Activated naive CD4-positive, alpha-beta T cell treated with anti-CD3 and anti-CD28 coated beads, Interleukin-2, amount 10 ng/mL, durations not matched to agents 7 days and 5 days (primary cell): ENCODE measurements at regions of chr7 and their contacts with region 1.

Region 1: GRCh38 chr7:137898839-137899721 is 52.3 kb upstream of the DGKI start:
- DNase-seq: peak; percentile 83
- H3K4me3 Mint-ChIP-seq: no peak overlapping the region
- H3K27ac Mint-ChIP-seq: peak overlapping the region; percentile 73
- H3K4me1 Mint-ChIP-seq: peaks cover 28% of the 10 kb centered on the region
- H3K27me3 Mint-ChIP-seq: no peaks in the 10 kb centered on the region

Region 2: DNA sequence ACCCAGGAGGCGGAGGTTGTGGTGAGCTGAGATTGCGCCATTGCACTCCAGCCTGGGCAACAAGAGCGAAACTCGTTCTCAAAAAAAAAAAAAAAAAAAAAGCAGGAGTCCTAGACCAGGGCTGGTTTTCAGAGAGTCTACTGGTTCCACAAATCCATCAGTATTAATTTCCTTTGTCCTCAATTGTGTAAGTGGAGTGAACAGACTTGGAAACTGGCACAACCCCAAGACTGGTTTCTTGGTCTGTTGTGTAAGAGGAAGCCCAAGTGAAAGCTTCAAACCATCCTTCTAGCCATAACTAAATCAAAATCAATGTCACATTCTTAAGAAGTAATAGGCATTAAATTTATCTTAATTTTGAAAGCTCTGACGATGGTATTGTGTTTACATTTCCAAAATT is 265.9 kb before region 1 on chr7:
- CTCF ChIA-PET with region 1: no interaction called
- DNase-seq: no peak
- H3K4me3 Mint-ChIP-seq: no peak overlapping the region
- H3K27ac Mint-ChIP-seq: no peak overlapping the region
- H3K4me1 Mint-ChIP-seq: no peaks in the 10 kb centered on the region
- H3K27me3 Mint-ChIP-seq: peaks cover 3% of the 10 kb centered on the region

Region 3: GRCh38 chr7:137656227-137656849 is 242.7 kb before region 1 on chr7:
- CTCF ChIA-PET with region 1: interaction called, 50 read pairs
- DNase-seq: peak; percentile 78
- H3K4me3 Mint-ChIP-seq: no peak overlapping the region
- H3K27ac Mint-ChIP-seq: no peak overlapping the region
- H3K4me1 Mint-ChIP-seq: no peaks in the 10 kb centered on the region
- H3K27me3 Mint-ChIP-seq: no peaks in the 10 kb centered on the region

Region 4: GRCh38 chr7:137920637-137921399 is 21.7 kb after region 1 on chr7:
- CTCF ChIA-PET with region 1: interaction called, 11 read pairs
- DNase-seq: no peak
- H3K4me3 Mint-ChIP-seq: no peak overlapping the region
- H3K27ac Mint-ChIP-seq: no peak overlapping the region
- H3K4me1 Mint-ChIP-seq: peaks cover 20% of the 10 kb centered on the region
- H3K27me3 Mint-ChIP-seq: no peaks in the 10 kb centered on the region

Region 5: DNA sequence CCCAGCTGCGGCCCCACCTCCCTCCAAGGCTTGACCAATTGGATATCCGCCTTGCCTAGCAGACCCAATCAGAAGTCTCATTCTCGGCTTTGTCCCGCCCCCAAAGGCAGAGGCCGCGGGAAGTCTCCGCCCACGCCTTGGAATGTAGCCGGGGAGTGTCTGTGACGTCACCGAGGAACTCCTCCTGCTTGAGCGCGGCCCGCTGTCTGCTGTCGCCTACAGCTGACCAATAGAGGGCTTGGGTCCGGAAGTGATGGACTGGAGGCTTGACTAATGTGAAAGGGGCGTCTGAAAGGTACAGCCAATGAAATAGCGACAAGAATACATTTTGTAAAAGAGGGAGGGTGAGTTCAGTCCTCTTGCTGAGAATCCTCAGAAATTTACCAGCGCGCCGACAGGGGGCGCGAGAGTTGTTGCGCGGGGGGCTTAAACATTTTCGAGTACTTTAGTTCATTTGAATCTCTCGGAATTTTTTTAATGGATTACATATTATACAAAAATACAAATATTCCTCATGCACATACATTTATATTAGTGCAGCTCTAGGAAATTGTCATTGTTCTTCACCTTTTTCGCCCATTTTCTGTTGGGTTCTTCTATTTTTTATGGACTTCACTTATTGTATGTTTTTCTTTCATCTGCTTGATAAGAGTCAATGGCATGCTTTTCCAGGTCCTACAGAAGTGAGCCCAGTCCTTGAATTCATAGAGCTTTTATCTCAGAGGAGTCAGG is 103.2 kb after region 1 on chr7:
- CTCF ChIA-PET with region 1: interaction called, 266 read pairs
- DNase-seq: peak; percentile 98
- H3K4me3 Mint-ChIP-seq: peak overlapping the region; percentile 93
- H3K27ac Mint-ChIP-seq: peak overlapping the region; percentile 95
- H3K4me1 Mint-ChIP-seq: peaks cover 43% of the 10 kb centered on the region
- H3K27me3 Mint-ChIP-seq: peaks cover 3% of the 10 kb centered on the region

Region 6: GRCh38 chr7:138173548-138173947 is 274.5 kb after region 1 on chr7:
- CTCF ChIA-PET with region 1: no interaction called
- DNase-seq: no peak
- H3K4me3 Mint-ChIP-seq: no peak overlapping the region
- H3K27ac Mint-ChIP-seq: no peak overlapping the region
- H3K4me1 Mint-ChIP-seq: peaks cover 30% of the 10 kb centered on the region
- H3K27me3 Mint-ChIP-seq: peaks cover 39% of the 10 kb centered on the region